Right ventricle myocardium inferior (tissue), 1 donor: ENCODE measurements at regions of chr6 and their contacts with region 1.

Region 1: DNA sequence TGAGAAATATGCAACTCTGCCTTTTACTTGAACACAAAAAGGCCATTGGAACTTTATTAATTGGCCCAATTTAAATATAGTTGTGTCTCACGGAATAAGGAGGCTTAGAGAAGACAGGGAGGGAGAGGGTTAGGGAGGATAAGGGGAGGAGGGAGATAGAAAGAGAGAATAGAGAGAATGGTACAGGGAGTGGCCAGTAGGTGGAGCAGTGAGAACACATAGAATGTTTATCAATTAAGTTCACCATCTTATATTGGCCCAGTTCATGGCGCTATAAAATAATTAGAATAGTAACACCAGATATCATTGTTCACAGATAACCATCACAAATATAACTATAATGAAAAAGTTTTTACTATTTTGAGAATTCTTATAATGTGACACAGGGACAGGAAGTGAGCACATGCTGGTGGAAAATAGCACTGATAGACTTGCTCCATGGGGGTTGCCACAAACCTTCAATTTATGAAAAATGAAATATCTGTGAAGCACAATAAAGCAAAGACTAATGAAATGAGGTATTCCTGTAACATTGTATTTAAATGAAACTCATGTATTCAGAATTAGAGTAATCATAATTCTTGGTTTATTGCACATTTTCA is 374.1 kb upstream of the MANEA start:
- DNase-seq: no peak
- ATAC-seq: no peak

Region 2: DNA sequence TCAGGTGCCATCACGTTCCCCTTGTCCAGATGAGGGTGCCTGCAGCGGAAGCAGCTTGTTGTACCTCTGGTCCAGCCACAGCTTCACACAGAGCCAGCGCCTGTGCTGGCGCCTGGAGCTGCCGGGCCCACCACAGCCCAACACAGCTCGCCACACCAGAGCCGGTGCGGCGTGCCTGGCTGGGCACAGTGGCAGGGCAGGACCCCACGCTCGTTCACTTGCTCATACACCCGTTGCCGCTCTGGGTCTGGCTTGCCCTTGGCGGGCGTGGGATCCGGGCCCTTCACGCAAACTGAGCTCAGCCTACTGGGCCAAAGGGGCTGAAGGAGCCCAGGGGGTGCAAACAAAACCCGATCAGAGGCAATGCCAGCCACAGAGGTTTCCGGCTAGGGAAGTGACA is 118.4 kb before region 1 on chr6:
- intact Hi-C with region 1: no loop called
- DNase-seq: peak; percentile 56
- ATAC-seq: no peak

Region 3: DNA sequence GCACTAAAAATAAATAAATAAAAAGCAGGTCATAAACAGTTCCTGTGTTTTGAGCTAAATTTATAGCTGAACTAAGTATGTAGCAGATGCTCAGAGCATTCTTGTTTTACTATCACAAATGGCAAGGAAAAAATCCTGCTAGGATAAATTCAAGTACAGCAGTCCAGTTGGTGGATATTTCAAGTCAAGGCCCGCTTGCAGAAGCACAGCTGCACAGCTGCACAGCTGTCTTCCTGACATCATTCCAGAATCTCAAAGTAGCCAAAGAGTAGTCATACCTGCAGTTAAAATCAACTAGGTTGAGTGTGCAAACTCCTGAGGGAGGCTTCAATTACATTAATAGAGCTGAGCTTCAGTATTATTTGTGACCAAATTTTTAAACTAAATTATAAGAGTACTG is 76.4 kb after region 1 on chr6:
- intact Hi-C with region 1: loop called (anchors 10 kb)
- DNase-seq: no peak
- ATAC-seq: no peak